Esophagus muscularis mucosa (tissue), 4 donors: ENCODE measurements at regions of chr1 and their contacts with region 1.

Region 1: DNA sequence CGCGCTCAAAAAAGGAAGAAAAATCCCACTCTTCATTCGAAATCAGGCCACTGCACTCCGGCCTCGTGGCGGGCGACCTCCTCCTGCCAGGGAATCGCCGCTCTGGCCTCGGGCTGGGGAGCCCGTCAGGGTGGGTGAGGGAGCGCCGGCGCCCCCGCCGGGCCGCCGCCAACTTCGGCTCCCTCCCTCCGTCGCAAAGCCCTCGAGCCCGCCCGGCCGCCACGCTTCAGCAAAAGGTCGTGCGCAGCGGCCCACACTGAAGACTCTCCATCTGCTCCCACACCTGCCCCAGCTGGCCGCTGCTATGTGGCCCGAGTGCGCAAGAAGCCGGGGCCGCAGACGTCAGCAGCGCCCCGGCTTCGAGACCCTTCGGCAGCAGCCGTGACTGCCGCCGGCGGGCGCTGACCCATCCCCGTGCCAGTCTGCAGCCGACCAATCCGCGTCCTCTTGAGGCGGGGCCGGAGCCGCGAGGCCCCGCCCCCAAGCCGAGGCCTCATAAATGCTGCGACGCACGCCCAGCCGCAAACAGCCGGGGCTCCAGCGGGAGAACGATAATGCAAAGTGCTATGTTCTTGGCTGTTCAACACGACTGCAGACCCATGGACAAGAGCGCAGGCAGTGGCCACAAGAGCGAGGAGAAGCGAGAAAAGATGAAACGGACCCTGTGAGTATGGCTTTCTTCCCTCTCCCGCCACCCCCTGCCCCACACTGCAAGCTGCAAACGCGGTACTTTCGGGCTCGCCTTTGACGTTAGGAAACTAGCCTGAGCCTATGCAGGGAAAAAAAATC is at the start of gene RGS2:
- DNase-seq: peak; percentile 97
- H3K4me3 ChIP-seq: peak within 1 kb of the TSS; percentile 62 to 86 (median 77)
- H3K27ac ChIP-seq: peak within 1 kb of the TSS; percentile 90 to 97 (median 94)
- H3K4me1 ChIP-seq: peaks cover 5 to 21% (median 14%) of the 10 kb centered on the region in 4 donors
- H3K27me3 ChIP-seq: no peaks in the 10 kb centered on the region
- CTCF ChIP-seq: peak in 2 of 3 experiments; percentile 18 to 33
- EP300 ChIP-seq: no peak
- POLR2A ChIP-seq: peak; percentile 98
- total RNA-seq, gene RGS2: 337 to 754 (median 525) TPM

Region 2: DNA sequence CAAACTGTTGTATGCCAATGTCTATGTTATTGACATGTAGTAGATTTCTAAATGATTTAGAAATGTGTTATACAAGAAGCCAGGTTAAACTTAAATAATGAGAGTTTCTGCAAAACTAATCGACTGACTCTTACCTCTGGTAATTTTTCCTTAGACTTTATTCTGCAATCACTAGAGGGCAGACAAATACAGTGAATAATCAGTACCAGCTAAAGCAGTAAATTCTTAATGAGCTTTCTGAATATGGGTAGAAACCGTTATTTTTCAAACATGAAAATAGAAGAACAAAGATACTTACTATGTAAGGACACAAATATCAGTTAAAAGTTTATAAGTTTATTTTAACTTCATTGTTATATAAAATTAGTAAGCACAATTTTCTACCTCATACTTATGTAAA is 331.1 kb before region 1 on chr1:
- intact Hi-C with region 1: loop called (anchors 5 kb)
- DNase-seq: no peak
- H3K4me3 ChIP-seq: no peak overlapping the region
- H3K27ac ChIP-seq: peak overlapping the region in 3 of 4 donors; percentile 28 to 47 (median 41)
- H3K4me1 ChIP-seq: peaks cover 3 to 33% (median 15%) of the 10 kb centered on the region in 4 donors
- H3K27me3 ChIP-seq: no peaks in the 10 kb centered on the region
- CTCF ChIP-seq: peak; percentile 62 to 80 (median 64)
- EP300 ChIP-seq: no peak
- POLR2A ChIP-seq: no peak

Region 3: DNA sequence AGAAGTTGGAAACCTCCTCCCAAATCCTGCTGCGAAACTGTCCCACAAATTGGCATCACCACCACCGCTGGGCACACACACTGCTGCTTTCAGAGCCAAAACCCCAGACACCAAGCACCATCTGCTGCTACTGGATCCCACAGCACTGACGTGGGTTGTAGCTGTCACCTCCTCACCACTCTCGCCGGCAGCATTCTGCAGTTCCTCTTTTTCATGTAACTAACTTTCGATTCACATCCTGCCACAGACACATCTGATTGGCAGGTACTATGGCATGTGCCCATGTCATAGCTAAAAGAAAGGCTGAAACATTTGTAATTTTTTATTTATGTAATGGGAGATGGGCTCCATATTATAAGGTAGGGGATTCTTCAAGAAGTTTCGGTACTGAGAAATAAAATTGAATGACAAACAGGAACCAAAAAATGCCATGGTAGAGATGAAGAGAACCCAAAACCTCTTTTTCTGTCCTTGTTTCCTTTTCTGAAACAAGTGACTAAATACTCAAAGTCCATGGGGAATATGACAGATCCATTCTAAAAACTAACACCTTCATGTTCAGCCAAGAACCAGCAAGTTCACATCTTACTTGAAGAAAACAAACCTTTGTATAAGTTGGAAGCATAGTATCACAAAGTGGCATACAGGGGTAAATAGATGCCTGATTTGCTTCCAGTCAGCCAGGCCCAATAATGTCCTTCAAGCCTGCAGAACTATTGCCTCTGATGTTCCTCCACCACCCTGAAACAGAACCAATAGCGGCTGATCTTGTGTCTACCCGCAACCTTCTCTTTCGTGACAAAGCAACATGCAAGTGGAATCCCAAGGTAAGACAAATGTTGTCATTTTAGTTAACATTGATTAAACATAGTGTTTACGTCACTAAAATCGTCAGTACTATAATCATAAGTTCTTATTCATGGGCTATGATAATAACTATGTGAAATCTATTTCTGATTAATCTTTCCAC is 199.3 kb before region 1 on chr1:
- intact Hi-C with region 1: loop called (anchors 10 kb)
- DNase-seq: no peak
- H3K4me3 ChIP-seq: no peak overlapping the region
- H3K27ac ChIP-seq: peak overlapping the region in 3 of 4 donors; percentile 33 to 47 (median 44)
- H3K4me1 ChIP-seq: peaks cover 0 to 26% (median 13%) of the 10 kb centered on the region in 4 donors
- H3K27me3 ChIP-seq: no peaks in the 10 kb centered on the region
- CTCF ChIP-seq: peak in 1 of 3 experiments; percentile 5
- EP300 ChIP-seq: no peak
- POLR2A ChIP-seq: no peak

Region 4: DNA sequence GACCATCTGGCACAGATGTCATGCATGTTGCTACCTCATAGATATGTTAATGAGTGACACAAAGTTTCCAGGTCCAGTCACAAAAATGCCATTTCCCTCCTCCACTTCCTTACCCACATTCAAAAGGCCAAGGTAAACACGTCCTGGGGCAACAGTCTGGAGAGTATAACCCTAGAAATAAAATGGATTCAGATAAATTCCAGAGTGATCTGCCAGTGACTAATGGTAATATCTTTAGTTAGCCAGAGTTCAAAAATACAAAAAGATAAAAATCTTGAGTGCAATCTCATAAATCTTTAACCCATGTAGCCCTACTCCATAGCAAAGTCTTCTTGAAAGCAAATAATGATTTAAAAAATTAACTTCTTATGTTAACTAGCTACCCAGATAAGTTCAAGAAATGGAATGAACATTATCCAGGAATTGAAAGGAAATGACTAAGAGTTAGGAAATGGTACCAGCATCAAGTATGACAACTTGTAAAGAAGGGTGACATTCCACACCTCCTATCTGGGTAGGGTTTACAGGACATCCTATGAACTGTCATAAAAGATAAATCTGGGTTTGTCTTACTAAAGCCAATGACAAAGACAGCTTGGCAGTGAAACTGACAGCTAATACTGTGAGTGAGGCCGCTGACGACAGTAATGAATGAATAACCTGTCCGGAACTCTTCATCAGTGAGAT is 18.2 kb after region 1 on chr1:
- intact Hi-C with region 1: no loop called
- DNase-seq: no peak
- H3K4me3 ChIP-seq: no peak overlapping the region
- H3K27ac ChIP-seq: no peak overlapping the region
- H3K4me1 ChIP-seq: peaks cover 0 to 14% (median 2%) of the 10 kb centered on the region in 4 donors
- H3K27me3 ChIP-seq: no peaks in the 10 kb centered on the region
- CTCF ChIP-seq: no peak
- EP300 ChIP-seq: no peak
- POLR2A ChIP-seq: no peak

Region 5: GRCh38 chr1:192877288-192877886 is 68.7 kb after region 1 on chr1:
- intact Hi-C with region 1: loop called (anchors 10 kb)
- DNase-seq: no peak
- H3K4me3 ChIP-seq: no peak overlapping the region
- H3K27ac ChIP-seq: no peak overlapping the region
- H3K4me1 ChIP-seq: peaks cover 14 to 28% (median 24%) of the 10 kb centered on the region in 4 donors
- H3K27me3 ChIP-seq: no peaks in the 10 kb centered on the region
- CTCF ChIP-seq: no peak
- EP300 ChIP-seq: no peak
- POLR2A ChIP-seq: no peak

Region 6: GRCh38 chr1:192907545-192908243 is 99.0 kb after region 1 on chr1:
- intact Hi-C with region 1: loop called (anchors 5 kb)
- DNase-seq: no peak
- H3K4me3 ChIP-seq: no peak overlapping the region
- H3K27ac ChIP-seq: peak overlapping the region; percentile 84 to 86 (median 86)
- H3K4me1 ChIP-seq: peaks cover 4 to 69% (median 58%) of the 10 kb centered on the region in 4 donors
- H3K27me3 ChIP-seq: no peaks in the 10 kb centered on the region
- CTCF ChIP-seq: no peak
- EP300 ChIP-seq: peak; percentile 98
- POLR2A ChIP-seq: no peak

Region 7: GRCh38 chr1:193019442-193020026 is 210.8 kb after region 1 on chr1:
- intact Hi-C with region 1: loop called (anchors 2 kb)
- DNase-seq: no peak
- H3K4me3 ChIP-seq: peak overlapping the region in 3 of 4 donors; percentile 3 to 11 (median 3)
- H3K27ac ChIP-seq: peak overlapping the region in 3 of 4 donors; percentile 20 to 53 (median 41)
- H3K4me1 ChIP-seq: peaks cover 3 to 36% (median 19%) of the 10 kb centered on the region in 4 donors
- H3K27me3 ChIP-seq: no peaks in the 10 kb centered on the region
- CTCF ChIP-seq: peak; percentile 58 to 75 (median 66)
- EP300 ChIP-seq: no peak
- POLR2A ChIP-seq: no peak

Region 8: GRCh38 chr1:193121616-193122593 is 313.2 kb after region 1 on chr1 and contains the start of gene CDC73:
- intact Hi-C with region 1: loop called (anchors 10 kb)
- DNase-seq: peak; percentile 99
- H3K4me3 ChIP-seq: peak within 1 kb of the TSS; percentile 81 to 91 (median 82)
- H3K27ac ChIP-seq: peak within 1 kb of the TSS; percentile 94 to 97 (median 96)
- H3K4me1 ChIP-seq: peaks cover 29 to 43% (median 41%) of the 10 kb centered on the region in 4 donors
- H3K27me3 ChIP-seq: no peaks in the 10 kb centered on the region
- CTCF ChIP-seq: peak; percentile 89 to 91 (median 91)
- EP300 ChIP-seq: no peak
- POLR2A ChIP-seq: peak; percentile 66
- total RNA-seq, gene CDC73: 45.4 to 66.9 (median 46.0) TPM